ENCODE measurements at regions of chr2 and their contacts with region 1.

Region 1: GRCh38 chr2:101012706-101013181 is 10.7 kb downstream of the RPL31 start:
- DNase-seq: no peak
- ATAC-seq: no peak
- H3K4me3 Mint-ChIP-seq: no peak overlapping the region
- H3K27ac Mint-ChIP-seq: no peak overlapping the region
- H3K4me1 Mint-ChIP-seq: peaks cover 29% of the 10 kb centered on the region
- H3K27me3 Mint-ChIP-seq: no peaks in the 10 kb centered on the region

Region 2: GRCh38 chr2:101001691-101002561 is 10.8 kb before region 1 on chr2 and contains the start of gene RPL31:
- CTCF ChIA-PET with region 1: interaction called, 24 read pairs
- DNase-seq: peak; percentile 98
- ATAC-seq: peak; percentile 96
- H3K4me3 Mint-ChIP-seq: peak within 1 kb of the TSS; percentile 97
- H3K27ac Mint-ChIP-seq: peak within 1 kb of the TSS; percentile 94
- H3K4me1 Mint-ChIP-seq: peaks cover 42% of the 10 kb centered on the region
- H3K27me3 Mint-ChIP-seq: no peaks in the 10 kb centered on the region
- total RNA-seq, gene RPL31: 1,012 to 1,324 TPM

Region 3: GRCh38 chr2:101151141-101151858 is 138.6 kb after region 1 on chr2 and contains the start of gene TBC1D8:
- CTCF ChIA-PET with region 1: interaction called, 10 read pairs
- DNase-seq: peak; percentile 64
- ATAC-seq: peak; percentile 94
- H3K4me3 Mint-ChIP-seq: peak within 1 kb of the TSS; percentile 70
- H3K27ac Mint-ChIP-seq: no peak within 1 kb of the TSS
- H3K4me1 Mint-ChIP-seq: peaks cover 14% of the 10 kb centered on the region
- H3K27me3 Mint-ChIP-seq: peaks cover 73% of the 10 kb centered on the region
- total RNA-seq, gene TBC1D8: 0.12 to 0.45 TPM

Region 4: GRCh38 chr2:101205521-101205998 is 192.8 kb after region 1 on chr2:
- CTCF ChIA-PET with region 1: interaction called, 17 read pairs
- DNase-seq: peak; percentile 67
- ATAC-seq: peak; percentile 97
- H3K4me3 Mint-ChIP-seq: peak overlapping the region; percentile 53
- H3K27ac Mint-ChIP-seq: peak overlapping the region; percentile 52
- H3K4me1 Mint-ChIP-seq: peaks cover 8% of the 10 kb centered on the region
- H3K27me3 Mint-ChIP-seq: peaks cover 4% of the 10 kb centered on the region